ENCODE measurements at regions of chr20 and their contacts with region 1.

Region 1: DNA sequence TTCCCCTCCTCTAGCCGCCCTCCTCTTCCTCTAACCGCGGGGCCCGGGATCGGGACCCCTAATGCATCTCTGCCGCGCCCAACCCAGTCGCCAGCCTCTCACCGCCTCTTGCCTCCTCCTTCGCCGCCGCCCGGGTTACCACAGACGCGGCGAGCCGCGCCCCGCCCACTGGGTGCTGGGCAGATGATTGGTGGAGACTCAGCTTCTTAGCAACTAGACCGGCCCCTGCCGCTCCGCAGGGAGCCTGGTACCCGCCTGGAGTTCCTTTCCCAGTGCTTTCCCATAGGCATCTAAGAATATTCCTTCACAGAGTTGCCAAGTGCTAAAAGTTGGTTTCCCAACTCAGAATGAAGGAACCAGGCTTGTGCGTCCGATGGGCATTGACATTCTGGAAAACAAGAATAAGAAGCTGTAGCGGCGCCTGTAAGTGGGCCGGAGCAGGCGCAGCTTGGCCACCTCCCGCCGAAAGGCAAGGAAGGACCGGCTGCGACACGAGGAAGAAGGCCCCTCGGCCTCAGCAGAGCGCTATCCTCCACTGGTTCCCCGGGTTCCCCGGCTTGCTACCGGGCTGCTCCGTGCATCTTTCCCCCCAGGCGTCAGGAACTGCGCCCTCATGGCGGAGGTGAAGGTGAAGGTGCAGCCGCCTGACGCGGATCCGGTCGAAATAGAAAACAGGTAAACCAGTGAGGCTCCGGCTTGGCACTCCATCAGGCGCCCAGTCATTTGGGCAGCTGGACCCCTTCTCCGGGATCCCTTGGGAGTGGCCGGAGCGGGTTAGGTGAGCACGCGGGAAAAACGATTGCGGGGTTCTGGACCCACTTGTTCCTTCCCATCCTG is at the starts of genes DZANK1 and POLR3F:
- DNase-seq: peak; percentile 84 to 96 (median 90)
- ATAC-seq: peak; percentile 89
- H3K4me3 ChIP-seq: peak within 1 kb of the TSS; percentile 95
- H3K4me3 Mint-ChIP-seq: peak within 1 kb of the TSS; percentile 96
- H3K27ac ChIP-seq: peak within 1 kb of the TSS; percentile 77 to 91
- H3K27ac Mint-ChIP-seq: peak within 1 kb of the TSS; percentile 96
- H3K4me1 ChIP-seq: peaks cover 17% of the 10 kb centered on the region
- H3K4me1 Mint-ChIP-seq: peaks cover 39% of the 10 kb centered on the region
- H3K27me3 ChIP-seq: no peaks in the 10 kb centered on the region
- H3K27me3 Mint-ChIP-seq: no peaks in the 10 kb centered on the region
- CTCF ChIP-seq: no peak
- total RNA-seq, gene DZANK1: 1.8 to 1.9 TPM
- total RNA-seq, gene POLR3F: 7.9 to 8.8 TPM

Region 2: DNA sequence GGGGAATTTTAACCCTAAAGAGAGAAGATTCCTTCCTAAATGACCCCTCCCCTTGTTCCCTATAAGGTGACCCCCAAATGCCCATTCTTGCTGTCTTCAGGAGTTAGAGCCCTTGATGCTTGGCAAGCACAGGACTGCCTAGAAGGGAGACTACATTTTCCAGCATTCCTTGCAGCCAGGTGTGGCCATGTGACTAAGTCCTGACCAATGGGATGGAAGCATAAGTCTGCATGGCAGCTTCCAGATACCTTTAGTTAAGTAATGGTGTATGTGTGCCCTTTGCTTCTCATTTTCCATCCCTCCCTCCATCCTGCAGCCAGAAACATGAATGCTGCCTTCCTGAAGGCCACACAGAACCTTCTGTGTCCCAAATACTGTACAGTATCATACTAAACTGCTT is 941.5 kb before region 1 on chr20:
- CTCF ChIA-PET with region 1: no interaction called
- POLR2A ChIA-PET with region 1: no interaction called
- intact Hi-C with region 1: no loop called
- DNase-seq: peak in 3 of 14 experiments; percentile 49 to 62 (median 54)
- ATAC-seq: peak; percentile 68
- H3K4me3 ChIP-seq: no peak overlapping the region
- H3K4me3 Mint-ChIP-seq: no peak overlapping the region
- H3K27ac ChIP-seq: no peak overlapping the region
- H3K27ac Mint-ChIP-seq: no peak overlapping the region
- H3K4me1 ChIP-seq: peaks cover under 1% of the 10 kb centered on the region
- H3K4me1 Mint-ChIP-seq: peaks cover 4% of the 10 kb centered on the region
- H3K27me3 ChIP-seq: peaks cover 0 to 9% of the 10 kb centered on the region in 2 experiments
- H3K27me3 Mint-ChIP-seq: peaks cover 11% of the 10 kb centered on the region
- CTCF ChIP-seq: no peak

Region 3: GRCh38 chr20:18144541-18145099 is 322.5 kb before region 1 on chr20:
- CTCF ChIA-PET with region 1: no interaction called
- POLR2A ChIA-PET with region 1: no interaction called
- intact Hi-C with region 1: loop called in 1 of 2 experiments (anchors 5 kb)
- DNase-seq: no peak
- ATAC-seq: no peak
- H3K4me3 ChIP-seq: no peak overlapping the region
- H3K4me3 Mint-ChIP-seq: no peak overlapping the region
- H3K27ac ChIP-seq: no peak overlapping the region
- H3K27ac Mint-ChIP-seq: no peak overlapping the region
- H3K4me1 ChIP-seq: peaks cover 11% of the 10 kb centered on the region
- H3K4me1 Mint-ChIP-seq: peaks cover 23% of the 10 kb centered on the region
- H3K27me3 ChIP-seq: no peaks in the 10 kb centered on the region
- H3K27me3 Mint-ChIP-seq: no peaks in the 10 kb centered on the region
- CTCF ChIP-seq: no peak

Region 4: GRCh38 chr20:18237682-18238081 is 229.4 kb before region 1 on chr20:
- CTCF ChIA-PET with region 1: no interaction called
- POLR2A ChIA-PET with region 1: no interaction called
- intact Hi-C with region 1: no loop called
- DNase-seq: no peak
- ATAC-seq: no peak
- H3K4me3 ChIP-seq: no peak overlapping the region
- H3K4me3 Mint-ChIP-seq: no peak overlapping the region
- H3K27ac ChIP-seq: no peak overlapping the region
- H3K27ac Mint-ChIP-seq: no peak overlapping the region
- H3K4me1 ChIP-seq: no peaks in the 10 kb centered on the region
- H3K4me1 Mint-ChIP-seq: no peaks in the 10 kb centered on the region
- H3K27me3 ChIP-seq: peaks cover 5 to 12% of the 10 kb centered on the region in 2 experiments
- H3K27me3 Mint-ChIP-seq: peaks cover 58% of the 10 kb centered on the region
- CTCF ChIP-seq: no peak

Region 5: GRCh38 chr20:18496740-18497592 is 29.9 kb after region 1 on chr20 and contains the start of gene RBBP9:
- CTCF ChIA-PET with region 1: interaction called, 3 read pairs
- POLR2A ChIA-PET with region 1: interaction called, 37 read pairs
- intact Hi-C with region 1: loop called (anchors 1 to 2 kb)
- DNase-seq: peak; percentile 48 to 87 (median 70)
- ATAC-seq: peak; percentile 93
- H3K4me3 ChIP-seq: peak within 1 kb of the TSS; percentile 72
- H3K4me3 Mint-ChIP-seq: peak within 1 kb of the TSS; percentile 94
- H3K27ac ChIP-seq: peak within 1 kb of the TSS; percentile 38 to 44
- H3K27ac Mint-ChIP-seq: peak within 1 kb of the TSS; percentile 80
- H3K4me1 ChIP-seq: peaks cover 10% of the 10 kb centered on the region
- H3K4me1 Mint-ChIP-seq: peaks cover 20% of the 10 kb centered on the region
- H3K27me3 ChIP-seq: no peaks in the 10 kb centered on the region
- H3K27me3 Mint-ChIP-seq: no peaks in the 10 kb centered on the region
- CTCF ChIP-seq: no peak
- total RNA-seq, gene RBBP9: 1.6 to 2.1 TPM

Region 6: DNA sequence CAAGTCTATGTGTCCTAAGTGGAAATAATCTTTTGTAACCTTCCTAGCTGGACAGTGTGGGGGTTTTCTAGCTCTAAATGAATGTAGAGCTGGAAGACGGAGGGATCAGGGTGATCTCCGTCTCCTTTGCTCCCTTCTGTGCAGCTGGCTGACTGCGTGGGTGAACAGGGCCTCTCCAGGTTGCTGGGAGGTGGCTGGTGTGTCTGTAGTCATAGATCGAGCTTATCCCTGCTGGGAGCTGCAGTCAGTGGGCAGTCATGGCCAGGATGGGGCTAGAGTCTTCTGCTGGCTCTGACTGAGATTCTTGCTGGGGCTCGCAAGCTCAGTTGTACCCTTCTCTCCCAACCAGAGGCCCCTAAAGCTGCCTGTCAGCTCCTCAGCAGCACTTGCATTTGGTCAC is 47.0 kb after region 1 on chr20:
- CTCF ChIA-PET with region 1: no interaction called
- POLR2A ChIA-PET with region 1: no interaction called
- intact Hi-C with region 1: no loop called
- DNase-seq: no peak
- ATAC-seq: no peak
- H3K4me3 ChIP-seq: no peak overlapping the region
- H3K4me3 Mint-ChIP-seq: no peak overlapping the region
- H3K27ac ChIP-seq: no peak overlapping the region
- H3K27ac Mint-ChIP-seq: no peak overlapping the region
- H3K4me1 ChIP-seq: peaks cover 8% of the 10 kb centered on the region
- H3K4me1 Mint-ChIP-seq: peaks cover 33% of the 10 kb centered on the region
- H3K27me3 ChIP-seq: no peaks in the 10 kb centered on the region
- H3K27me3 Mint-ChIP-seq: no peaks in the 10 kb centered on the region
- CTCF ChIP-seq: no peak

Region 7: GRCh38 chr20:18566892-18567742 is 100.0 kb after region 1 on chr20 and contains the start of gene SMIM26:
- CTCF ChIA-PET with region 1: no interaction called
- POLR2A ChIA-PET with region 1: interaction called, 4 read pairs
- intact Hi-C with region 1: loop called (anchors 1 to 5 kb)
- DNase-seq: peak; percentile 90 to 97 (median 94)
- ATAC-seq: peak; percentile 99
- H3K4me3 ChIP-seq: peak within 1 kb of the TSS; percentile 91
- H3K4me3 Mint-ChIP-seq: peak within 1 kb of the TSS; percentile 99
- H3K27ac ChIP-seq: peak within 1 kb of the TSS; percentile 82 to 94
- H3K27ac Mint-ChIP-seq: peak within 1 kb of the TSS; percentile 100
- H3K4me1 ChIP-seq: peaks cover 20% of the 10 kb centered on the region
- H3K4me1 Mint-ChIP-seq: peaks cover 28% of the 10 kb centered on the region
- H3K27me3 ChIP-seq: no peaks in the 10 kb centered on the region
- H3K27me3 Mint-ChIP-seq: no peaks in the 10 kb centered on the region
- CTCF ChIP-seq: no peak
- total RNA-seq, gene SMIM26: 78.7 to 79.8 TPM

Region 8: GRCh38 chr20:18728165-18728869 is 261.2 kb after region 1 on chr20:
- CTCF ChIA-PET with region 1: no interaction called
- POLR2A ChIA-PET with region 1: no interaction called
- intact Hi-C with region 1: no loop called
- DNase-seq: no peak
- ATAC-seq: no peak
- H3K4me3 ChIP-seq: no peak overlapping the region
- H3K4me3 Mint-ChIP-seq: no peak overlapping the region
- H3K27ac ChIP-seq: no peak overlapping the region
- H3K27ac Mint-ChIP-seq: no peak overlapping the region
- H3K4me1 ChIP-seq: no peaks in the 10 kb centered on the region
- H3K4me1 Mint-ChIP-seq: peaks cover 30% of the 10 kb centered on the region
- H3K27me3 ChIP-seq: no peaks in the 10 kb centered on the region
- H3K27me3 Mint-ChIP-seq: no peaks in the 10 kb centered on the region
- CTCF ChIP-seq: no peak

Measured in CD4-positive, alpha-beta T cell (primary cell).